HEK293T (cell line): ENCODE measurements at regions of chr4 and their contacts with region 1.

Region 1: DNA sequence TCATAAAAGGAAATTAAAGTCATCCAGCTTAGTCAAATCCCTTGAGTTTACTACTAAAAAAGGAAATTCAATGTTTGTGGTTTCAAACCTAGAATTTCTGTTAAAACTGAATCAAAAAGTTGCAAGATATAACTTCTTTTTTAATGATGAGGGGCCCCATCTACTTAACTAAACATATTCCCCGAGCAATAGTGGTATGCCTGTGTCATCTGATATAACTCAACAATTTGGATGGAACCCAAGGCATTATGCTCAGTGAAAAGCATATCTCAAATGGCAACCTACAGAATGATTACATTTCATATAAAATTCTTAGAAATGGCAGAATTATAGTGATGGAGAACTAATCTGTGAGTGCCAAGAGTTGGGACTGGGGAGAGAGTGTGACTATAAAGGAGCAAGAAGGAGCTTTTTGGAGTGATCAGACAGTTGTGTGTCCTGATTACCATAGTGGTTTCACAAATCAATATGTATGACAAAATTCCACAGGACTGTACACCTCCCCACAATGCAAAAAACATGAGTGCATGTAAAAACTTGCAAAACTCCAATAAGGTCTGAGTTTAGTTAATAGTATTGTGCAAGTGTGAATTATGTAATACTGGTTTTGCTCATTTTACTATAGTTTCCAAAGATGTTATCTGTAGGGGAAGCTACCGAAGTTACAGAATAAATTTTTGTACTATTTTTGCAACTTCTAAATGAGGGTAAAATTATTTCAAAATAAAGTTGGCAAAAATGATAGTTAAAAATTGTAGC is 323.2 kb downstream of the ARHGAP24 start:
- DNase-seq: no peak

Region 2: GRCh38 chr4:85778632-85779131 is 19.5 kb before region 1 on chr4:
- CTCF ChIA-PET with region 1: interaction called, 14 read pairs
- POLR2A ChIA-PET with region 1: no interaction called
- DNase-seq: no peak

Region 3: DNA sequence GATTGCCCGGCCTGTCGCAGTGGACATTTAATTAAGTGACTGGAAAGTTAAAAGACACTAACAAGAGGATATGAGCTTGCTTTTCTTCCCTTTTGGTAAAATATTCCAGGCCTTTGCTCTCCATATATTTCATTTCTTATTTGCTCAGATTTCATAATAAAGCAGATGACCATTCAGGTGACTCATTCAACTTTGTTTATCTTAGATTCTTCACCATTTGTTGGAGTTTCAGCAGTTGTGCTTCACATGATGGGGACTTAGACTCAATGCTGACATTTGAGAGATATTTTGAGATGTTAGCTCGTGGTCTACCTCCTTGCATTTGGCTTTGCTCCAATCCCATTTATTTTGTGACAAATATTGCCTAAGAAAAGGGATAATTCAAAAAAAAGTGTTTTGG is 11.1 kb before region 1 on chr4:
- CTCF ChIA-PET with region 1: interaction called, 12 read pairs
- POLR2A ChIA-PET with region 1: no interaction called
- DNase-seq: no peak

Region 4: GRCh38 chr4:85812776-85813175 is 14.6 kb after region 1 on chr4:
- CTCF ChIA-PET with region 1: interaction called, 11 read pairs
- POLR2A ChIA-PET with region 1: no interaction called
- DNase-seq: no peak

Region 5: GRCh38 chr4:85968945-85969819 is 171.0 kb after region 1 on chr4:
- CTCF ChIA-PET with region 1: interaction called, 25 read pairs
- POLR2A ChIA-PET with region 1: no interaction called
- DNase-seq: peak; percentile 49

Region 6: GRCh38 chr4:86043755-86044592 is 245.8 kb after region 1 on chr4:
- CTCF ChIA-PET with region 1: interaction called, 14 read pairs
- POLR2A ChIA-PET with region 1: no interaction called
- DNase-seq: peak; percentile 33

Region 7: GRCh38 chr4:86089781-86090323 is 291.7 kb after region 1 on chr4:
- CTCF ChIA-PET with region 1: no interaction called
- POLR2A ChIA-PET with region 1: no interaction called
- DNase-seq: no peak